ENCODE measurements at regions of chr19 and their contacts with region 1.

Region 1: DNA sequence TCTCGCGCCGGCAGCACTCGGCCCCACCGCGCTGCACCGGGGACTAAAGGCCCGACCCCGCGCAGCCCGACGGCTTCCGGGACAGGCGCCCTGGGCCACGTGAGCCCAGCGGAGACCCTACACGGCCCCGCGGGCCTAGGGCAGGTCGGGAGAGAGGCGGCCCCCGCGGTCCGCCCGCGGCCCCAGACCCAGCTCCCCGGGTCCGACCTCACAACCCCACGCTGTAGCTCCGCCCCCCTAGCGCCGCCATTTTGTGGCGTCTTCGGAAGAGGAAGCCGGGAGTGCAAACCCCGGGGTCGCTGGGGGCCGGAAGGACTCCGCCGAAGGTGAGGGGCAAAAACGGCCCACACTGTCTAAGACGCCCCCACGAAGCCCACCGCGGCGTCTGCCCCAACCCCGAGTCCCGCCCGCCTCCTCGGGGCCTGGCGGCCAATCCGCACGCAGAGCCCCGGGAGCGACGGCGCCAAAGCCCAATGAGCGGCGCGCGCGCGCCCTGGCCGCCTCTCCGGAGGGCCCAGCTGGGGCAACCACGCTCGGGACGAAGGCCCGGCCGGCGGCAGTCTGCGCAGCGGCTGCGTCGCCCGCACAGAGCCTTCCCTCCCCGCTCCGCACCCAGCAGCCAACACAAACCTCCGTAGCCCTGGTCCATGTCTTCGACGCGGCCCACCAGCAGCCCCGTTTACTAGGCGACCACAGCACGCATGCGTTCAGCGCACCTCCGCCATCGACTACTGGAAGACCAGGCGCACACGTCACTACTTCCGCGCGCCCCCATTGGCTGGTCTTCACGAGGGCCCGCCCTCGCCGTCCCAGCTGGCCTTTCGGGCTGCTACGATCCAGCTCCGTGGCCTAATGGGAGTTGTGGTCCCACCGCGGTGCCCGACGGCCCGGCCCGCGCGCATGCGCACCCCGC is at the start of gene AKAP8:
- DNase-seq: peak; percentile 96
- ATAC-seq: peak; percentile 88
- H3K4me3 ChIP-seq: peak within 1 kb of the TSS; percentile 84 to 98 (median 91)
- H3K27ac ChIP-seq: peak within 1 kb of the TSS; percentile 95
- H3K4me1 ChIP-seq: peaks cover 48% of the 10 kb centered on the region
- H3K27me3 ChIP-seq: no peaks in the 10 kb centered on the region; a peak in 1 of 5 replicates
- CTCF ChIP-seq: no peak
- EP300 ChIP-seq: peak in 1 of 2 experiments; percentile 4; a peak in 1 of 4 replicates
- POLR2A ChIP-seq: peak; percentile 80 to 85
- RAD21 ChIP-seq: peak; percentile 10; the same call in 1 of the 2 replicates
- total RNA-seq, gene AKAP8: 21.2 and 22.1 TPM in 2 replicates

Region 2: GRCh38 chr19:15280915-15281683 is 98.2 kb before region 1 on chr19:
- CTCF ChIA-PET with region 1: no interaction called
- POLR2A ChIA-PET with region 1: interaction called, 3 read pairs
- in situ Hi-C with region 1: no loop called
- intact Hi-C with region 1: loop called (anchors 10 kb)
- DNase-seq: peak; percentile 55
- ATAC-seq: peak; percentile 60
- H3K4me3 ChIP-seq: 0 out of 6 replicates have a peak overlapping the region, but pooled peaks of 1 of the 3 experiments have one; percentile 7
- H3K27ac ChIP-seq: peak overlapping the region; percentile 70
- H3K4me1 ChIP-seq: peaks cover 95% of the 10 kb centered on the region
- H3K27me3 ChIP-seq: no peaks in the 10 kb centered on the region
- CTCF ChIP-seq: peak; percentile 42
- EP300 ChIP-seq: no peak; a peak in 1 of 4 replicates
- POLR2A ChIP-seq: no peak
- RAD21 ChIP-seq: no peak

Region 3: DNA sequence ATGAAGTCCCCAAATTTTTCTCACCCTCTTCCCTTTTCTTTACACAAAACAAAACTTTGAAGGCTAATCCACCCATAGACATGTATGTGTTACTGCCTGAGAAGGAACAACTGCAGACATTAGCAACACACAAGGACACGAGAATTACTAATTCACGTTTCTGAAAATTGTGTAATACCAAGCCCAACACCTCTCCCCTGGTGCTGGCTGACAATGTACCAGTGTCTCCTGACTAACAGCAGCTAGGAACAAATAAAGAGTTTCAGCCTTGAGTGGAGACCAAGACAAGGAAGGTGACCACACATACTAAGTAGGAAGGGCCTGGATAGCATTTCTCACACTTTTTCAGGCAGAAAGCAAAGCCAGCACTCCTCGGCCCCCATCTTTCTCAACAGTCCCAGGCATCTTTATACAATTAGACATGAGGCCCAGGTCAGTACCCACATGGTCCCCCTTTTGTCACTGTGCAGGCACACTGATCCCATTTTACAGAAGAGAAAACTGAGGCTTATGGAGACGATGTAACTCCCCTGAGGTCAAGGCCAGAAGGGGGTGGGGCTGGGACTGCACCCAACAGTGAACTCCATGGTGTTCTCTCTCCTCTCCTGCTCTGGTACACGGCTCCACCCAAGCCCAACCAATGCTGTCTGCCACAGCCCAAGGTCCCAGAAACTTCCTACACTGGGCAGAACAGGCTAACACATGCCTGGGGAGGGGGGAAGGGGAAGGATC is 55.7 kb before region 1 on chr19:
- CTCF ChIA-PET with region 1: no interaction called
- POLR2A ChIA-PET with region 1: no interaction called
- in situ Hi-C with region 1: no loop called
- intact Hi-C with region 1: loop called (anchors 5 kb)
- DNase-seq: peak; percentile 59
- ATAC-seq: peak; percentile 65
- H3K4me3 ChIP-seq: no peak overlapping the region
- H3K27ac ChIP-seq: peak overlapping the region; percentile 40
- H3K4me1 ChIP-seq: peaks cover 92% of the 10 kb centered on the region
- H3K27me3 ChIP-seq: no peaks in the 10 kb centered on the region
- CTCF ChIP-seq: no peak
- EP300 ChIP-seq: no peak
- POLR2A ChIP-seq: no peak
- RAD21 ChIP-seq: no peak

Region 4: DNA sequence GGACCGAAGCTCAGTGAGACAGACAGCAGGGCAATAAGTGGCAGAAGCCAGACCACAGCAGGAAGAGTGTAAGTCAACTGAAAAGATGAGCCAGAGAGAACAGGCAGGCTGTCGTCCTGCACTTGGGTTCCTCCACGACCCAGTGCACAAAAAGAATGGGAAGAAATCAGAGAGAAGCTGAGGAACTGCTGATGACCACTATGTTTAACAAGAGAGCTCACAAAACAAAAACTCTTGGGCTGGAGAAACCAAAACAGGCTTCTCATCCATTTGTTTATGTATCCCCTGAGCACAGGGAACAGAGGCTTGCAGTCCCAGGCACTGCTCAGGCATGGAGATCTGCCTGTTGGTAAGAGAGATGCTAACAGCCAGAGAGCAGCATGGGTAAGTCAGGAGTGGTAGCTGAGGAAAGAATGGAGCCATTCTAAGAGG is 25.5 kb after region 1 on chr19:
- CTCF ChIA-PET with region 1: no interaction called
- POLR2A ChIA-PET with region 1: interaction called, 30 read pairs
- in situ Hi-C with region 1: no loop called
- intact Hi-C with region 1: no loop called
- DNase-seq: no peak
- ATAC-seq: no peak
- H3K4me3 ChIP-seq: no peak overlapping the region
- H3K27ac ChIP-seq: no peak overlapping the region
- H3K4me1 ChIP-seq: peaks cover 7% of the 10 kb centered on the region
- H3K27me3 ChIP-seq: no peaks in the 10 kb centered on the region
- CTCF ChIP-seq: no peak
- EP300 ChIP-seq: no peak
- POLR2A ChIP-seq: no peak
- RAD21 ChIP-seq: no peak

Region 5: DNA sequence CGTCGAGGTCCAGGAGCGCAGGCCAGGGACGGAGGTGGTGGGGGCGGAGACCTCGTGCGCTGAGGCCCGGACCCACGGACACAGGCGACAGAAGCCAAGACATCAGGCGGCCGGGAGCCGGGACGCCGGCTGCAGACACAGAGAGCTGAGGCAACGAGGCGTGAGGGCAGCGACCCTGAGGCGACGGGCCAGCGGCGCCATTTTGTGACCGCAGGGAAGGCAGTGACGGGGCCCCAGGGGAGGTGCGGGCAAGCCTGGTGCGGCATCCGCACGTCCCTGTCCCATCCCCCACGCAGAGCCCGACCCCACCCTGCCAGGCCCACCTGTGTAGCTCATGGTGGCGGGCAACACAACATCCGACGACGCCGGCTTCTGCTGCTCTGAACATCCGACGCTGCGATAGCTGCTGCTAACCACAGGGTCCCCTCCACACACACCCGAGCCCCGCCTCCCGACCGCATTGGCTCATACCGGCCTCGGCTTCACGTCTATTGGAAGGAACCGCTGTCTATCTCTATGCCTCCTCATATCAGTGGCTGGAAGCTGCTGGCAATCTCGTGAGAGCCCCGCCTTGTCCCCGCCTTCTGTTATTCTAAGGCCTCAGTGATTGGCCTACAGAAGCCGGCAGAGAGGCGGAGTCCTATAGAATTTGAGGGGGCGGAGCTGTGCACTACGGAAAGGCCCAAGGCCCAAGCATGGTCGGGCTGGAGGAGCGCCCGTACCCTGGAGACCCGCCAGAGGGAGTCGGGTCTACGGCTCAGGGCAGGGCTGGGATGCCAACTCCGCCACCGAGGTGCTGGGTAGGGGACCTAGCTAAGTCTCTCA is 39.5 kb after region 1 on chr19 and contains the start of gene AKAP8L:
- CTCF ChIA-PET with region 1: no interaction called
- POLR2A ChIA-PET with region 1: interaction called, 67 read pairs
- in situ Hi-C with region 1: no loop called
- intact Hi-C with region 1: loop called (anchors 5 kb)
- DNase-seq: peak; percentile 99
- ATAC-seq: peak; percentile 98
- H3K4me3 ChIP-seq: peak within 1 kb of the TSS; percentile 84 to 97 (median 85)
- H3K27ac ChIP-seq: peak within 1 kb of the TSS; percentile 81
- H3K4me1 ChIP-seq: peaks cover 34% of the 10 kb centered on the region
- H3K27me3 ChIP-seq: no peaks in the 10 kb centered on the region; a peak in 1 of 5 replicates
- CTCF ChIP-seq: peak; percentile 92
- EP300 ChIP-seq: peak in 1 of 2 experiments; percentile 8; a peak in 1 of 4 replicates
- POLR2A ChIP-seq: peak; percentile 97 to 98
- RAD21 ChIP-seq: peak; percentile 91
- total RNA-seq, gene AKAP8L: 27.3 and 48.2 TPM in 2 replicates